ENCODE measurements at regions of chr6 and their contacts with region 1.

Region 1: GRCh38 chr6:37169496-37170272 is at the start of gene PIM1:
- DNase-seq: peak; percentile 100
- ATAC-seq: peak; percentile 76
- H3K4me3 Mint-ChIP-seq: peak within 1 kb of the TSS; percentile 91
- H3K27ac Mint-ChIP-seq: peak within 1 kb of the TSS; percentile 96
- H3K4me1 Mint-ChIP-seq: peaks cover 39% of the 10 kb centered on the region
- H3K27me3 Mint-ChIP-seq: no peaks in the 10 kb centered on the region
- total RNA-seq, gene PIM1: 137 to 163 TPM

Region 2: DNA sequence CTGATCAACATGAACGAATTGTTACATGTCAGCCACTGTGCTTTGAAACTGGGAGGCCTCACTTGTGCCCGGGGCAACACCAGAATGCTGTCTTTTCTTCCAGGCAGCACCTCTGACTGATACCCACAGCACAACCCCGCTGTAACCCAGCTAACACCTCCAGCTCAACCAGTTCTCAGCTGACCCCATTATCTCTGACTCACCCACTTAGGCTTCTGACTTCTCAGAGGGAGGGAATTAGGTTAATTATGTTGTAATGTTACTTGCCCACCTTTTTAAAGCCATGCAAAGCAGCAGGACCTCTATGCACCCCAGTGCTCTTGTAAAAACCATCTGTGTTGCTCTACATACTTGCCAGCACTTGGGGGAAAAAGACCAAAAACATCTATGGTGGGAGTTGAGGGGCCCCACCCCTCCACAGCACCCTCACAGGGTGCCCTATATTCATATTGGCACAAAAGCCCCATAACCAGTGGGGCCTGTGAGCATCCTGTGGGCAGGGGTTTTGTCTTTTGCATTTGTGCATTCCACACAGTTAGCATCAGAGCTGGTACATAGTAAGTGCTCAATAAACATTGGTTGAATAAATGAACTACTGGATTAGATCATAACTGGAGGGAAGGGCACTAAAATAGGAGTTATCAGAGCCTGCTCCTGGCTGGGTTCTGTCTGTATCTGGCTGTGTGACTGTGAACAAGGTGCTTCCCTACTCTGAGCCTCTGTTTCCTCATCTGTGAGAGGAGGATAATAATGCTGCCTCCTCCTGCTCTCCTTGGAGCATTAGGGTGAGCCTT is 855.3 kb before region 1 on chr6:
- CTCF ChIA-PET with region 1: no interaction called
- POLR2A ChIA-PET with region 1: no interaction called
- intact Hi-C with region 1: no loop called
- DNase-seq: peak; percentile 12
- ATAC-seq: no peak
- H3K4me3 Mint-ChIP-seq: no peak overlapping the region
- H3K27ac Mint-ChIP-seq: no peak overlapping the region
- H3K4me1 Mint-ChIP-seq: no peaks in the 10 kb centered on the region
- H3K27me3 Mint-ChIP-seq: peaks cover 2% of the 10 kb centered on the region

Region 3: GRCh38 chr6:36678518-36679027 is 491.1 kb before region 1 on chr6 and contains the start of gene CDKN1A:
- CTCF ChIA-PET with region 1: no interaction called
- POLR2A ChIA-PET with region 1: no interaction called
- intact Hi-C with region 1: loop called in 1 of 2 experiments (anchors 2 kb)
- DNase-seq: peak; percentile 88
- ATAC-seq: peak; percentile 61
- H3K4me3 Mint-ChIP-seq: peak within 1 kb of the TSS; percentile 85
- H3K27ac Mint-ChIP-seq: peak within 1 kb of the TSS; percentile 86
- H3K4me1 Mint-ChIP-seq: peaks cover 45% of the 10 kb centered on the region
- H3K27me3 Mint-ChIP-seq: peaks cover 12% of the 10 kb centered on the region
- total RNA-seq, gene CDKN1A: 31.3 to 35.9 TPM

Region 4: GRCh38 chr6:36985808-36986703 is 183.6 kb before region 1 on chr6 and contains the start of gene MTCH1:
- CTCF ChIA-PET with region 1: interaction called, 3 read pairs
- POLR2A ChIA-PET with region 1: interaction called, 5 read pairs
- intact Hi-C with region 1: loop called in 1 of 2 experiments (anchors 1 kb)
- DNase-seq: peak; percentile 93
- ATAC-seq: peak; percentile 80
- H3K4me3 Mint-ChIP-seq: no peak within 1 kb of the TSS
- H3K27ac Mint-ChIP-seq: peak within 1 kb of the TSS; percentile 95
- H3K4me1 Mint-ChIP-seq: peaks cover 18% of the 10 kb centered on the region
- H3K27me3 Mint-ChIP-seq: no peaks in the 10 kb centered on the region
- total RNA-seq, gene MTCH1: 72.9 to 92.9 TPM

Region 5: GRCh38 chr6:36997811-36998722 is 171.6 kb before region 1 on chr6:
- CTCF ChIA-PET with region 1: no interaction called
- POLR2A ChIA-PET with region 1: no interaction called
- intact Hi-C with region 1: no loop called
- DNase-seq: no peak
- ATAC-seq: no peak
- H3K4me3 Mint-ChIP-seq: no peak overlapping the region
- H3K27ac Mint-ChIP-seq: no peak overlapping the region
- H3K4me1 Mint-ChIP-seq: no peaks in the 10 kb centered on the region
- H3K27me3 Mint-ChIP-seq: no peaks in the 10 kb centered on the region

Region 6: GRCh38 chr6:37102279-37103168 is 67.2 kb before region 1 on chr6:
- CTCF ChIA-PET with region 1: interaction called, 14 read pairs
- POLR2A ChIA-PET with region 1: interaction called, 3 read pairs
- intact Hi-C with region 1: loop called (anchors 1 to 2 kb)
- DNase-seq: peak; percentile 86
- ATAC-seq: peak; percentile 89
- H3K4me3 Mint-ChIP-seq: peak overlapping the region; percentile 60
- H3K27ac Mint-ChIP-seq: peak overlapping the region; percentile 86
- H3K4me1 Mint-ChIP-seq: peaks cover 28% of the 10 kb centered on the region
- H3K27me3 Mint-ChIP-seq: no peaks in the 10 kb centered on the region

Region 7: DNA sequence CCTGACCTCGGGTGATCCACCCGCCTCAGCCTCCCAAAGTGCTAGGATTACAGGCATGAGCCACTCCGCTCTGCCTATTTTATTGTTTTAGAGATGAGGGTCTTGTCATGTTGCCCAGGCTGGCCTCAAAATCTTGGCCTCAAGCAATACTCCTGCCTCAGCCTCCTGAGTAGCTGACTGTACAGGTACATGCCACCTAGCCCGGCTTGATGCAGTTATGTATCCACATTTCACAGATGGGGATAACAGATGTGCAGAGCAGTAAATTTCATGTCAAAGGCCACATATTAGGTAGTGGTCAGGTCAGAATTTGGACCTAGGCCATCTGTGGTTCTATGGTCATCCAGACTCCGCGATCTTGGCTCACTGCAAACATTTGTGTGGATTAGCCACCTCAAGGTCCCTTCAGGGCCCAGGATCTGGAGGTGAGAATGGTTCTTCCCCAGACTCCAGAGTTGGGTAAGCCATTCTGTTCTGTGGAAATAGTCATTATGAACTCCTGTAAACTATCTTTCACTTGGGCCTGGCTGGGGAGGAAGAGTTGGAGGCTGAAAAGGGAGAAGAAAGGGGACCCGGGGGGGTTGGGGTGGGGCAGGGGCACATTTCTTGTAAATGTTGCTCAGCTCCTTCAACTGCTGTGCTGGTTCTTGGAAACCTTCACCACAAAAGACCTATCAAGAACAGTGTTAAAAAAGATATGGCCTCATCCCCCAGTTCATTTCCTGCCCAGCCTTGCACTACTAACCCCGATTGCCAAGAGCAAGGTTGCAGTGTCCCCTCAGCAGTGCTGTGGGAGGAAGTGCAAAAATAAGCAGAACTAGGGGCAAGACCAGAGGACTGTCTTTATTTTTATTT is 13.3 kb after region 1 on chr6:
- CTCF ChIA-PET with region 1: interaction called, 15 read pairs
- POLR2A ChIA-PET with region 1: interaction called, 4 read pairs
- intact Hi-C with region 1: loop called in 1 of 2 experiments (anchors 1 kb)
- DNase-seq: peak; percentile 77
- ATAC-seq: peak; percentile 91
- H3K4me3 Mint-ChIP-seq: peak overlapping the region; percentile 26
- H3K27ac Mint-ChIP-seq: peak overlapping the region; percentile 97
- H3K4me1 Mint-ChIP-seq: peaks cover 44% of the 10 kb centered on the region
- H3K27me3 Mint-ChIP-seq: no peaks in the 10 kb centered on the region

Region 8: DNA sequence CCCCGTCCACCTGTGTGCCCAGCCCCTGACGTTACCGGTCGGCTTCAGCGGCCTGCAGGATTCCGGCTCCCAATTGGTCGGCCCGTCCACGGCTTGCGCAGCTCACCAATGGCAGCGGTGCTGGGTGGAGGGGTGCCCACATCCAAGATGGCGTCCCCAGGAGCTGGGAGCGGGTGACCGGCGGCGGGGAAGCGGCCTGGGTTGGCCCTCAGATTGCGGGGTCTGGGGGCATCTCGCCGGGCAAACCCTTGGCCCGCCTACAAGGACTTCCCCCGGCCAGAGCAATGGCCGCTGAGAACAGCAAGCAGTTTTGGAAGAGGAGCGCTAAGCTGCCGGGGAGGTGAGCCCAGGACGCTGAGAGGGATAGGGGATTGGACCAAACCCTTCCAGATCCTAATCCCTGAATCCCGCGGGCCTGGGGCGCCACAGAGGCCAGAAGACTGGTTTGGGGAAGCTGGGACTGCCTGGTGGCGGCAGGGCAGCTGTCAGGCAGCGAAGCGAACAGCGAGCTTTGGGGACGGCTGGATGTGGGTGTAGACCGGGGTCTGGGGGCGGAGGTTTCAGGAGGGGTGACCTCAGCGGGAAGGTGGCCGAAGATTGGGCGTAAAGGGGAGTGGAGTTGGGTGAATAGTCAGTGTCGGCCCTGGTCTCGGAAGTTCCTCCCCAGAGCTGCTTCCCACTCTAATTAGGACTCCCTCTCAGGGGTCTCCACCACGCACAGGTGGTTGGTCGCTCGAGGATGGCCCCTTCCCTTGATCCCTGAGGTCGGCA is 88.1 kb after region 1 on chr6 and contains the starts of genes TBC1D22B and TMEM217:
- CTCF ChIA-PET with region 1: interaction called, 5 read pairs
- POLR2A ChIA-PET with region 1: interaction called, 7 read pairs
- intact Hi-C with region 1: loop called in 1 of 2 experiments (anchors 1 kb)
- DNase-seq: peak; percentile 98
- ATAC-seq: peak; percentile 99
- H3K4me3 Mint-ChIP-seq: peak within 1 kb of the TSS; percentile 74
- H3K27ac Mint-ChIP-seq: peak within 1 kb of the TSS; percentile 94
- H3K4me1 Mint-ChIP-seq: peaks cover 45% of the 10 kb centered on the region
- H3K27me3 Mint-ChIP-seq: no peaks in the 10 kb centered on the region
- total RNA-seq, gene TBC1D22B: 14.9 to 17.0 TPM
- total RNA-seq, gene TMEM217: 2.5 TPM

Region 9: DNA sequence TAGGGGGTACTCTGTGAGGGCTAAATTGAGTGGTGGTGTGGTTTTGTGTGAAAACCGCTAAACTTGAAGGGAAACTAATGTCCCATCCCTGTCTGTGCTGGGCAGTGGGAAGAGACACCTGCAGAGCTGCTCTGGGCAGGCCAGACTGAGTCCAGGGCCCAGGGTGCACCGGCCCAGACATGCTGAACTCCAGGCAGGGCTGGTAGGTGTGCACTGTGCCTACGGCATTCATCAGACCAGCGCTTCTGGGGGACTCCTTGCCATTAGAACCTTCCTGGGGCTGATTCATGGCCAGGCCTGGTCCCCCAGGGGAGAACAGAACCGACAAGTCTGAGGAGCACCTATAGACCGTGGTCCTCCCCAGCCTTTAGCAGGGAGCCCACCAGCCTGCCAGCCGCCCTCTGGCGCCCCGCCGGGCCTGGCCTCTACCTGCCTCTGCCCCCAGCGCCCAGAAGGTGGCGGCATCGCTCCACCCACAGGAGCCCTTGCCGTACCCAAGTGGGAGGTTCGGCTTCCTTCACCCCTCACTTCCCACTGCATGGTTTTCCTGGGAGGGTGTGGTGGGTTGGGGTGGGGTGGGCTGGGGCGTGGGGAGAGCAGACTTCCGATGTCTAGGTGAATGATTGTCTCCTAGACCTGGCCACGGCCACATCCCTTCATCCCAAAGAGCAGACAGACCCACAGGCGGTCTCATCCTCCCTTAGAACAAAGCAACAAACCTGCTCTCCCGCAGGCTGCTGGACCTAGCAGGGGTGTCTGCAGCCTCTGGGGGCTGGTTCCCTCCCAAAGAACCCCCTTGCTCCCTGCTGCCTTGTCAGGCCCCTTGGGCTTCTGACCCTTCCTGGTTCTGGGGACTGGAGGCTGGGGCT is 314.5 kb after region 1 on chr6:
- CTCF ChIA-PET with region 1: no interaction called
- POLR2A ChIA-PET with region 1: no interaction called
- intact Hi-C with region 1: no loop called
- DNase-seq: peak; percentile 86
- ATAC-seq: peak; percentile 61
- H3K4me3 Mint-ChIP-seq: no peak overlapping the region
- H3K27ac Mint-ChIP-seq: no peak overlapping the region
- H3K4me1 Mint-ChIP-seq: peaks cover 15% of the 10 kb centered on the region
- H3K27me3 Mint-ChIP-seq: no peaks in the 10 kb centered on the region